PC-9 (cell line): ENCODE measurements at regions of chr9 and their contacts with region 1.

Region 1: GRCh38 chr9:129028192-129028957 is at the start of gene SH3GLB2:
- DNase-seq: peak; percentile 73 to 98
- H3K4me3 ChIP-seq: peak within 1 kb of the TSS; percentile 63
- H3K27ac ChIP-seq: peak within 1 kb of the TSS; percentile 48
- H3K4me1 ChIP-seq: peaks cover 47% of the 10 kb centered on the region
- H3K27me3 ChIP-seq: no peaks in the 10 kb centered on the region
- CTCF ChIP-seq: peak; percentile 86
- total RNA-seq, gene SH3GLB2: 184 and 213 TPM in 2 replicates

Region 2: GRCh38 chr9:128947422-128948301 is 80.7 kb before region 1 on chr9 and contains the starts of genes DOLK and NUP188:
- CTCF ChIA-PET with region 1: interaction called, 11 read pairs
- POLR2A ChIA-PET with region 1: no interaction called
- intact Hi-C with region 1: no loop called
- DNase-seq: peak; percentile 80 to 98
- H3K4me3 ChIP-seq: peak within 1 kb of the TSS; percentile 96
- H3K27ac ChIP-seq: peak within 1 kb of the TSS; percentile 61
- H3K4me1 ChIP-seq: peaks cover 6% of the 10 kb centered on the region; the same call in 1 of the 2 replicates
- H3K27me3 ChIP-seq: no peaks in the 10 kb centered on the region
- CTCF ChIP-seq: no peak
- total RNA-seq, gene DOLK: 18.0 and 19.0 TPM in 2 replicates
- total RNA-seq, gene NUP188: 59.7 and 90.0 TPM in 2 replicates

Region 3: GRCh38 chr9:128992995-128993394 is 35.4 kb before region 1 on chr9:
- CTCF ChIA-PET with region 1: interaction called, 4 read pairs
- POLR2A ChIA-PET with region 1: no interaction called
- intact Hi-C with region 1: loop called (anchors 1 kb)
- DNase-seq: no peak
- H3K4me3 ChIP-seq: no peak overlapping the region
- H3K27ac ChIP-seq: no peak overlapping the region
- H3K4me1 ChIP-seq: no peaks in the 10 kb centered on the region
- H3K27me3 ChIP-seq: no peaks in the 10 kb centered on the region
- CTCF ChIP-seq: no peak; the same call in 1 of the 2 replicates

Region 4: DNA sequence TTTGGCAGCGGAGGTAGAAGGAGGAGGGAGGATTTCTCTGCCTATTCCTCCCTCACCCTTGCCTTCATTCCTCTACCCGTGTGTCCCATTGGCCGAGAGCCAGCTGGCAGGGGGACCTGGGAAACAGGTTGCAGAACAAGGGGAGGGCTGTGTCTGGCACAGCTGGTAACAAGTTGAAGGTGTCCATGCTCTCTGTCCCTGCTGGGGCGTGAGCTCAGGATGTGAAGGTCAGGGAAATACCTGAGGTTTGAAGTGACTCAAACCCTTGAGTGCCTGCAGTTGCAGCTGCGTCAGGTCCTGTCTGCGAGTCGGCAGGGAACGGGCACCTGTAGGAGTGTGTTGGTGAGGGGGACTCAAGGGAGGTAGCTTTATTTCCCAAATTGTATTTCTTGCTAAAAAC is 24.2 kb after region 1 on chr9:
- CTCF ChIA-PET with region 1: interaction called, 15 read pairs
- POLR2A ChIA-PET with region 1: interaction called, 12 read pairs
- intact Hi-C with region 1: loop called (anchors 1 kb)
- DNase-seq: peak; percentile 99 to 100
- H3K4me3 ChIP-seq: no peak overlapping the region; the same call in 1 of the 2 replicates
- H3K27ac ChIP-seq: peak overlapping the region; percentile 74
- H3K4me1 ChIP-seq: peaks cover 32% of the 10 kb centered on the region
- H3K27me3 ChIP-seq: no peaks in the 10 kb centered on the region
- CTCF ChIP-seq: no peak

Region 5: GRCh38 chr9:129080602-129081387 is 52.4 kb after region 1 on chr9 and contains the start of gene DOLPP1:
- CTCF ChIA-PET with region 1: interaction called, 6 read pairs
- POLR2A ChIA-PET with region 1: no interaction called
- intact Hi-C with region 1: loop called (anchors 1 kb)
- DNase-seq: peak; percentile 99 to 100
- H3K4me3 ChIP-seq: peak within 1 kb of the TSS; percentile 73
- H3K27ac ChIP-seq: no peak within 1 kb of the TSS
- H3K4me1 ChIP-seq: peaks cover 27% of the 10 kb centered on the region
- H3K27me3 ChIP-seq: no peaks in the 10 kb centered on the region
- CTCF ChIP-seq: no peak
- total RNA-seq, gene DOLPP1: 21.5 and 24.4 TPM in 2 replicates